ENCODE measurements at regions of chr19 and their contacts with region 1.

Region 1: GRCh38 chr19:45886427-45887199 is 672 bp upstream of the IRF2BP1 start:
- DNase-seq: peak; percentile 94
- H3K4me3 ChIP-seq: peak overlapping the region; percentile 72 to 81
- H3K27ac ChIP-seq: peak overlapping the region; percentile 78 to 92
- H3K4me1 ChIP-seq: peaks cover 3 to 39% of the 10 kb centered on the region in 2 experiments; a peak in 2 of 4 replicates
- H3K27me3 ChIP-seq: no peaks in the 10 kb centered on the region
- CTCF ChIP-seq: no peak
- EP300 ChIP-seq: no peak
- RAD21 ChIP-seq: no peak

Region 2: DNA sequence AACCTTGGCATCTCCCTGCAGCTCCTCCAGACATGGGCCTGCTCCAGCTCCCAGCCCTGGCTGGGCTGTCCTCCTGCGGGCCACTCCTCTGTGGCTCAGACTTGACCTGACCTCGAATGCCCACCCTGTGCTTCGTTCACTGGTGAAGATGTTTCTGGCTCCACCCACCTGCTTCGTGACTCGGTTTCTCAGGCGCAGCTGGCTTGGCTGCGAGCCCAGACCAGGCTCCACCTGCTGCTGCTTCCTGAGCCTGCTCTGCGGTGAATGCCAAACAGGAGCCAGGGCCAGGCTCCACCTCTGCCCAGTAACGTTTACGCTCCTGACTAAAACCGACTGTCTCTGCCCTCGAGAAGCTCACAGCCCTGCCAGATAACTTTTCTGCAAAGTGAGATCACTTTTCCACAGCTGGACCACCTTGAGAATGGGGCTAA is 62.6 kb before region 1 on chr19:
- CTCF ChIA-PET with region 1: interaction called, 130 read pairs
- POLR2A ChIA-PET with region 1: interaction called, 3 read pairs
- DNase-seq: no peak
- H3K4me3 ChIP-seq: no peak overlapping the region
- H3K27ac ChIP-seq: no peak overlapping the region; a peak in 1 of 4 replicates
- H3K4me1 ChIP-seq: peaks cover 0 to 17% of the 10 kb centered on the region in 2 experiments; a peak in 1 of 4 replicates
- H3K27me3 ChIP-seq: no peaks in the 10 kb centered on the region
- CTCF ChIP-seq: no peak
- EP300 ChIP-seq: no peak
- RAD21 ChIP-seq: no peak

Region 3: DNA sequence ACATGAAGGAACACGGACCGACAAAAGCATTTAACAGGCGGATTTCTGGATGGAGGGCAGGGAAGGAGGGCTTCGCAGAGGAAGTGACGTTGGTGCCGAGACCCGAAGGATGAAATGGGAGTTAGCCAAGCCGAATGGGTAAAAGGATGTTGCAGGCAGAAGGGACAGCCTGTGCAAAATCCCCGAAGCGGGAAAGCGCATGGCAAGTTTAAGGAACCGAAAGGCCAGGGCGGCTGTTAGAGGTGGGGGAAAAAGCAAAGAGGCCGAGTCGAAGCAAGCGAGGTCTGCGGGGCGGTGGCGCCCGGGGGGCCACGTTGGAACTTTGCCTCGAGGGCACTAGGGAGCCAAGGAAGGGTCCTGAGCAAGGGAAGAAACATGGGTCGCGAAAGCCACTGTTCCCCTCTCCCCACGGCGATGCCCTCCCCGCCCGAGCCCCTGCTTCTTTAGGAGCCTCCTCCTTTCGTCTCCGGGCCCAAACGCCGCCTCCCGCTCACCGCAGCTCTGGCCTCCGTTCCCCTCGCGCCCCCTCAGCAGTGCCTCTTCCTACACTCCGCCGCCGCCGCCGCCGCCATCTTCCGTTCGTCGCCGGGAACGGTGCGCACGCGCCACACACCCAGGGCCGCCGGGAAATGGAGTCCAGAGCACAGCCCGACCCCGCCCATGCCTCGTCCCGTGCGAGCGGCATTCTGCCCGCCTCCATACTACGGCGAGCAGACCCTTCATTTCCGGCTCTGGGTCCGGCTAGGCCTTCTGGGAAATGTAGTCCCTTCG is 23.9 kb before region 1 on chr19 and contains the start of gene SYMPK:
- CTCF ChIA-PET with region 1: interaction called, 121 read pairs
- POLR2A ChIA-PET with region 1: interaction called, 8 read pairs
- DNase-seq: peak; percentile 99
- H3K4me3 ChIP-seq: peak within 1 kb of the TSS; percentile 77 to 96
- H3K27ac ChIP-seq: peak within 1 kb of the TSS; percentile 89 to 93
- H3K4me1 ChIP-seq: peaks cover 0 to 6% of the 10 kb centered on the region in 2 experiments; a peak in 2 of 4 replicates
- H3K27me3 ChIP-seq: peaks cover 19% of the 10 kb centered on the region; the same call in 1 of the 2 replicates
- CTCF ChIP-seq: no peak
- EP300 ChIP-seq: no peak
- RAD21 ChIP-seq: no peak
- polyA plus RNA-seq, gene SYMPK: 76.3 and 92.7 TPM in 2 replicates

Region 4: GRCh38 chr19:45902651-45903625 is 16.3 kb after region 1 on chr19:
- CTCF ChIA-PET with region 1: interaction called, 15 read pairs
- POLR2A ChIA-PET with region 1: interaction called, 19 read pairs
- DNase-seq: peak; percentile 100
- H3K4me3 ChIP-seq: peak overlapping the region; percentile 60 to 82
- H3K27ac ChIP-seq: peak overlapping the region; percentile 80 to 91
- H3K4me1 ChIP-seq: peaks cover 0 to 8% of the 10 kb centered on the region in 2 experiments; a peak in 1 of 4 replicates
- H3K27me3 ChIP-seq: no peaks in the 10 kb centered on the region
- CTCF ChIP-seq: no peak
- EP300 ChIP-seq: no peak
- RAD21 ChIP-seq: no peak

Region 5: DNA sequence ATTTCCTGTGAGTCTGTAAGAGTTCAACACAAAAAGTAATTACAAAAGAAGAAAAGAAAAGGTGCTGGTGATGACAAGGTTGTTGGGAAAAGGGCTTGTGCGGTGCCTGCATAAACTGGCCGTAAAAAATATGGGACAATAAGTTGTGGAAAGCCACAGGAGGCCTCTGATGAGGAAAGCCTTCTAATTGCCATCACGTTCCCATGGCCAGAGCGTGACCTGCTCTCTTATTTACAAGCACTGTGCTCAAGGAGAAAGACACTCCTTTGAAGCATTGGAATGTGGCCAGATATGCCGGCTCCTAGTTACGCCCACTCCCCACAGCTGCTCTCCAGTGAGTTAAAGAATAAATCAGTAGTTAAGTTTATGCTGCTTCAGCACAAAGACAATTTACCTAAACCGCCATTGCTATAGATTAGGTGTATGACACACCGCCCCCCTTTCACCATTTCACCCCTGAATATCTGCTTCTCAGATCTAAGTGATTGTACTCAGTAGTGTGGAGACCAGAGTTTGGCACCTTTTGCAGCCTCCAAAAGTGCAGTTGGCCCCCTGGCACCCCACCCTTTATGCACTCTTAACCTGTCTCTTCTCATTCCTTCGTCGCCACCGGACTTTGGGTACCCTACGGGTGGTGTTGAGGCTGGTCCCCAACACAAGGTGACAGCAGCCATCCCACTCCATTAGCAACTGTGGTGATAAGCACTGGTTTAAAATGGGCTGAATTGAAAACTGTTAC is 144.4 kb after region 1 on chr19:
- CTCF ChIA-PET with region 1: no interaction called
- POLR2A ChIA-PET with region 1: no interaction called
- DNase-seq: no peak
- H3K4me3 ChIP-seq: no peak overlapping the region
- H3K27ac ChIP-seq: no peak overlapping the region
- H3K4me1 ChIP-seq: no peaks in the 10 kb centered on the region
- H3K27me3 ChIP-seq: peaks cover 12% of the 10 kb centered on the region; the same call in 1 of the 2 replicates
- CTCF ChIP-seq: no peak
- EP300 ChIP-seq: no peak
- RAD21 ChIP-seq: no peak

Measured in SK-N-SH (cell line).